ENCODE measurements at regions of chr11 and their contacts with region 1.

Region 1: GRCh38 chr11:124656774-124657630 is 16.5 kb downstream of the SIAE start:
- DNase-seq: no peak
- H3K4me3 ChIP-seq: no peak overlapping the region
- H3K27ac ChIP-seq: no peak overlapping the region
- H3K4me1 ChIP-seq: no peaks in the 10 kb centered on the region
- H3K27me3 ChIP-seq: no peaks in the 10 kb centered on the region
- CTCF ChIP-seq: no peak

Region 2: GRCh38 chr11:124533626-124534025 is 123.4 kb before region 1 on chr11:
- CTCF ChIA-PET with region 1: no interaction called
- POLR2A ChIA-PET with region 1: no interaction called
- intact Hi-C with region 1: no loop called
- DNase-seq: no peak
- H3K4me3 ChIP-seq: no peak overlapping the region
- H3K27ac ChIP-seq: no peak overlapping the region
- H3K4me1 ChIP-seq: peaks cover 7% of the 10 kb centered on the region; the same call in 1 of the 2 replicates
- H3K27me3 ChIP-seq: no peaks in the 10 kb centered on the region
- CTCF ChIP-seq: no peak

Region 3: GRCh38 chr11:124865921-124866583 is 209.1 kb after region 1 on chr11:
- CTCF ChIA-PET with region 1: interaction called, 11 read pairs
- POLR2A ChIA-PET with region 1: no interaction called
- intact Hi-C with region 1: no loop called
- DNase-seq: no peak
- H3K4me3 ChIP-seq: no peak overlapping the region
- H3K27ac ChIP-seq: no peak overlapping the region
- H3K4me1 ChIP-seq: peaks cover 8% of the 10 kb centered on the region; the same call in 1 of the 2 replicates
- H3K27me3 ChIP-seq: peaks cover 96% of the 10 kb centered on the region
- CTCF ChIP-seq: no peak